Left cardiac atrium (tissue), 4 donors: ENCODE measurements at regions of chr15 and their contacts with region 1.

Region 1: DNA sequence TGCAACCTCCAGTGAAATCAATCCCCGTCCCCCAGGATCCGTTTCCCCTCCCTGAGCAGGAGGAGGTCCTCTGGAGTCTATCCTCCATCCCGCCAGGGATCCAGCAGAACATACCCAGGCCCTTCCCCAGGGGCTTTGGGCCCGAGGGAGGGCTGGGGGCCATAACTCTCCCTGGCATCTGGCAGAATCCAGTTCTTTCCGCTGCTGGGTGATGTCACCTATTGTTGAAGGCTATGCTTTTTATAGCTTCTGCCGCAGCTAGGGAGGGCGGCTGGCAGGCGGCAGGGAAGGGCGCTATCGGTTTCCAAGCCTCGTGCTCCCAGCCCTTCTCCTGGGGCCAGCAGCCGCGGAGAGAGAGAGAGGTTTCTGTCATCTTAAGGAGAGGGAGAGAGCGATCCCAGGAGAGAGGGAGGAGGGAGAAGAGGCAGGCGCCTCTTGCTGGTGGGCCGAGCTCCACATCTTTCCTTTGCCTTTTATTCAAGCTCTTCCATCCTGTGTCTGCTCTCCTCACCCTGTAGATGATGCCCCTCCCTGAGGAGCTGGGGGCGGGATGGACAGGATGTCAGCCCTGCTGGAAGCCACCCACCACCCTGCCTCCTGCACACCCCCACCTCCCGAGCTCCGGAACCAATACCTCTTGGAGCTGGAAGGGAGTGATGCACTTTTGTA is 120.1 kb downstream of the ANP32A start:
- DNase-seq: peak; percentile 73
- ATAC-seq: peak; percentile 72 to 76

Region 2: GRCh38 chr15:68820295-68821189 is 120.0 kb after region 1 on chr15 and contains the start of gene ANP32A:
- intact Hi-C with region 1: loop called in 1 of 2 experiments (anchors 10 kb)
- DNase-seq: peak; percentile 98
- ATAC-seq: peak; percentile 84 to 87
- total RNA-seq, gene ANP32A: 106 to 118 TPM